Right ventricle myocardium superior (tissue), 1 donor: ENCODE measurements at regions of chr1 and their contacts with region 1.

Region 1: DNA sequence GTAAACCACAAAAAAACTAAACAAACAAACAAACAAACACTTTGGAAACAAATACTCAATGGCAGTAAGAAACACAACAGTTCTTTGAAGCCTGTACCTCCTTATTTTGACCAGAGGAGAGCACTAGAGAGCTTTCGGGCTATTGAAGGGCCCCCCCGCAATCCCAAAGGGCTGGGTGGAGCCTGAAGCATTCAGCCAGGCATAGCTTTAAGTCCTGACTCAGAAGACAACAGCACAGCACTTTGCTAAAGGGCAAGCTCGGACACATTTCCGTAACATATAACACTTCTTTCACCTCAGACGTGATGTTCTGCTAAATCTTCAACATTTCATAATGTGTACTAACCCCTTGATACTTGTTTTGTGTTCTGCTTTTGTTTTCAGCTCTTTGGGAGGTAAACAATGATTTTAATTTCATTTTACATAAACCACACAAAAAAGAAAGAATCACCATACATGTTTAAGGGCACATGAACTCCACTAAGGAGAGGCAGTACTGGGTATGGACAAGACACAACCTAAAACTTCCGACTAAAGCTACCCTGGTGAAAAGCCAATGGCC is 9.7 kb upstream of the SHCBP1L start:
- DNase-seq: peak; percentile 86
- ATAC-seq: peak; percentile 99

Region 2: DNA sequence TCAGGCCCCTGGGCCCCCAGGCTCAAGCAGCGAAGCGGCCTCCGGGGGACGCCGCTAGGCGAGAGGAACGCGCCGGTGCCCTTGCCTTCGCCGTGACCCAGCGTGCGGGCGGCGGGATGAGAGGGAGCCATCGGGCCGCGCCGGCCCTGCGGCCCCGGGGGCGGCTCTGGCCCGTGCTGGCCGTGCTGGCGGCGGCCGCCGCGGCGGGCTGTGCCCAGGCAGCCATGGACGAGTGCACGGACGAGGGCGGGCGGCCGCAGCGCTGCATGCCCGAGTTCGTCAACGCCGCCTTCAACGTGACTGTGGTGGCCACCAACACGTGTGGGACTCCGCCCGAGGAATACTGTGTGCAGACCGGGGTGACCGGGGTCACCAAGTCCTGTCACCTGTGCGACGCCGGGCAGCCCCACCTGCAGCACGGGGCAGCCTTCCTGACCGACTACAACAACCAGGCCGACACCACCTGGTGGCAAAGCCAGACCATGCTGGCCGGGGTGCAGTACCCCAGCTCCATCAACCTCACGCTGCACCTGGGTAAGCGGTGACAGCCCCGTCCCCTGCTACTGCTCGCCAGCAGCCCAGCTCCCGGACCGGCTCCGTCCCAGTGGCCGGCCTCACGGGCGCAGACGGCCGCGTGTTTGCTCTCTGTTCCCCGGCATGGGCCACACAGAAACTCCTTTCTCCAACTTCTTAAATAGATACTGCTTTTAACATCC is 61.1 kb after region 1 on chr1:
- intact Hi-C with region 1: loop called (anchors 2 kb)
- DNase-seq: peak; percentile 72
- ATAC-seq: peak; percentile 31

Region 3: GRCh38 chr1:183124259-183124658 is 161.6 kb after region 1 on chr1:
- intact Hi-C with region 1: loop called (anchors 10 kb)
- DNase-seq: peak; percentile 53
- ATAC-seq: no peak

Region 4: DNA sequence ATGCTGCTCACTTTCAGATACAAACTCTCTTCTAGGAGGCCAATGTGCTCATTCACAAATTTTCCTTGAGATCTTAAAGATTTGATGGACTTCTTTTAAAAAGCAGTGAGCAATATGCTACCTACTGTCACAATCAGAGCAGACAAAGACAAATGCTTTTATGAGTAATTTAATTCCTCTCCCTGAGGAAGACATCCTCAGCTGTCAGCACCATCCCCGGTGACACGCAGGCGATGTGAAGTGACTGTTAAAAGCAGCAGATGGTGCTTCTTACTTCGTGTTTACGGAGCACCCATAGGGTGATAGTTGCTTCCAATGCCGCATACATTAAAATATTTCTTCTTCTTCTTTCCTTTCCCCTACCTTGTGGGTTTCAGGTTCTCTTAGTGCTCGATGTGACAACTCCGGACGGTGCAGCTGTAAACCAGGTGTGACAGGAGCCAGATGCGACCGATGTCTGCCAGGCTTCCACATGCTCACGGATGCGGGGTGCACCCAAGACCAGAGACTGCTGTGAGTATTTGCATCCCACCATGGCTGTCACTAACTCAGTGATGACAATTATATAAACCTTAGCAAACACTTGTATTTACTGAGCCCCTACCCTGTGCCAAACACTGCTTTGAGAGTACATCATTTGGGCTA is 252.6 kb after region 1 on chr1:
- intact Hi-C with region 1: no loop called
- DNase-seq: no peak
- ATAC-seq: no peak

Region 5: GRCh38 chr1:183227963-183228649 is 265.5 kb after region 1 on chr1:
- intact Hi-C with region 1: loop called (anchors 5 kb)
- DNase-seq: peak; percentile 58
- ATAC-seq: peak; percentile 72